ENCODE measurements at regions of chr13 and their contacts with region 1.

Region 1: GRCh38 chr13:99275093-99275469 is 16.9 kb upstream of the GPR18 start:
- DNase-seq: peak; percentile 72
- H3K4me3 Mint-ChIP-seq: no peak overlapping the region
- H3K27ac Mint-ChIP-seq: peak overlapping the region; percentile 44
- H3K4me1 Mint-ChIP-seq: peaks cover 93% of the 10 kb centered on the region
- H3K27me3 Mint-ChIP-seq: no peaks in the 10 kb centered on the region

Region 2: GRCh38 chr13:99288089-99288488 is 13.0 kb after region 1 on chr13:
- CTCF ChIA-PET with region 1: interaction called, 37 read pairs
- POLR2A ChIA-PET with region 1: interaction called, 6 read pairs
- intact Hi-C with region 1: loop called (anchors 1 kb)
- DNase-seq: peak; percentile 87
- H3K4me3 Mint-ChIP-seq: no peak overlapping the region
- H3K27ac Mint-ChIP-seq: peak overlapping the region; percentile 80
- H3K4me1 Mint-ChIP-seq: peaks cover 85% of the 10 kb centered on the region
- H3K27me3 Mint-ChIP-seq: no peaks in the 10 kb centered on the region

Region 3: GRCh38 chr13:99296398-99296797 is 21.3 kb after region 1 on chr13:
- CTCF ChIA-PET with region 1: interaction called, 93 read pairs
- POLR2A ChIA-PET with region 1: interaction called, 10 read pairs
- intact Hi-C with region 1: loop called (anchors 1 kb)
- DNase-seq: no peak
- H3K4me3 Mint-ChIP-seq: peak overlapping the region; percentile 47
- H3K27ac Mint-ChIP-seq: peak overlapping the region; percentile 88
- H3K4me1 Mint-ChIP-seq: peaks cover 80% of the 10 kb centered on the region
- H3K27me3 Mint-ChIP-seq: no peaks in the 10 kb centered on the region

Measured in activated CD4-positive, alpha-beta memory T cell treated with anti-CD3 and anti-CD28 coated beads for 36 hours (primary cell).